ENCODE measurements at regions of chr14 and their contacts with region 1.

Region 1: DNA sequence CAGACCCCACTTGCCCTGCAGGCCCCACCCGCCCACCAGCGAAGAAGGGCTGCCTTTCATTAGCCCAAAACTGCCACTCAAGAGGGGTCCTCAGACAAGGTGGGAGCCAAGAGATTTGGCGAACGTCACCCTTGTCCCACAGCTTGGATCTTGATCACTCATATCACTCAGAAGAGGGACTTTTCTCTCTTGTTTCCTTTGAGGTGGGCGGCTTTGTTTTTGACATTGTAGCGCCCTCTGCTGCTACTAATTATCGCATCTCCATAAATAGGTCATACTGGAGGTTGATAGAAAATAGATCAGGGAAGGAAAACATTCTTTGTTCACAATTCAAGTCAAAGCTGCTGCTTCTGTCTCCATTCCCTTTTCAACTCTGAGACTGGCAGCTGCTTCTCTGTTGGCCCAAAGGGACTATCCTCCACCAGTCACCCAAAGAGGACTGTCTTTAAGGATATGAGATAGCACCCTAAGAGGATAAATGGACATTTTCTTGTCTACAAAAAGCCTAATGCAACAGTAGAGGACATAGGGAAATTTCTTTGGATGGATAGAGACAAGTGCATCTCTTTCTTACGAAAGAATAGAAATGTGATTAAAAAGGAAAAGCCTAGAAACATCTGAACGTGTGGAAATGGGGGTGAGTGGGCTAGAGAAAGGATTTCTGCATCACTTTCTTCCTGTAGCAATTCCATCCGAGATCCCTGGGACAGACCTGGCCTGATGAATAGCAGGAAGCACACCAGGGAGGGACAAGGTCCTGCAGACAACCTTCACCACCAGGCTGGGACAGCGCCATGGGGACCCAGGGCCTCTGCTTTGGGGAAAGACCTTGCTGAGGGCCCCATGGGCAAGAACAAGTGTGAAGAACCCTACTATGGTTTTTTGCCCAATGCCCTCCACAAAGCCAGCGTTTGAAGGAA is 115.8 kb downstream of the DAD1 start:
- DNase-seq: peak; percentile 29 to 77 (median 50)
- H3K4me3 ChIP-seq: no peak overlapping the region
- H3K27ac ChIP-seq: no peak overlapping the region
- H3K4me1 ChIP-seq: peaks cover 0 to 9% of the 10 kb centered on the region in 2 donors
- H3K27me3 ChIP-seq: no peaks in the 10 kb centered on the region
- CTCF ChIP-seq: peak; percentile 34 to 79 (median 70)
- POLR2A ChIP-seq: no peak

Region 2: DNA sequence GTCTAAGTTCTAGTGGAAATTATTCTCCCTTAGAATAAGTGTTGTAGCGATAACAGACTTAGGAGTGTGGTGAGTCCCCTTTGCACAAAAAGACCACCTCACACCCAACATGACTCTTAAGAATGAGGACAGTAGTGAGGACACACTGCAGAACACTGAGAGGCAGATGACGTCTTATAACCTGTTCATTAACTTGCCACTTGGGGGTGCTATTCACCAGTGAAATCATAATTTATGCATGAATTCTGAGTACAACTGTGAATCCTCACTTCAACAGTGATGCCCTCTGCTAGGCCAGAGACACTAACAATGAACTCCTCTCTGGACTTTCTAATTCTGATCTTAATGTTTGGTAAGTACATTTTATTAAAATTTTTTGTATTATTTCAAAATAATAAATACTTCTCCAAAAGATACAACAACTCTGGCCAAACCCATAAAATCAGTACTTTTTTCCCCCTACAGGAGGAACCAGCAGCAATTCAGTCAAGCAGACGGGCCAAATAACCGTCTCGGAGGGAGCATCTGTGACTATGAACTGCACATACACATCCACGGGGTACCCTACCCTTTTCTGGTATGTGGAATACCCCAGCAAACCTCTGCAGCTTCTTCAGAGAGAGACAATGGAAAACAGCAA is 158.9 kb before region 1 on chr14:
- intact Hi-C with region 1: loop called in 1 of 2 experiments (anchors 10 kb)
- DNase-seq: peak in 4 of 7 donors; percentile 15 to 43 (median 39)
- H3K4me3 ChIP-seq: no peak overlapping the region
- H3K27ac ChIP-seq: no peak overlapping the region
- H3K4me1 ChIP-seq: no peaks in the 10 kb centered on the region
- H3K27me3 ChIP-seq: peaks cover 5% of the 10 kb centered on the region
- CTCF ChIP-seq: peak; percentile 49 to 74 (median 68)
- POLR2A ChIP-seq: no peak

Region 3: DNA sequence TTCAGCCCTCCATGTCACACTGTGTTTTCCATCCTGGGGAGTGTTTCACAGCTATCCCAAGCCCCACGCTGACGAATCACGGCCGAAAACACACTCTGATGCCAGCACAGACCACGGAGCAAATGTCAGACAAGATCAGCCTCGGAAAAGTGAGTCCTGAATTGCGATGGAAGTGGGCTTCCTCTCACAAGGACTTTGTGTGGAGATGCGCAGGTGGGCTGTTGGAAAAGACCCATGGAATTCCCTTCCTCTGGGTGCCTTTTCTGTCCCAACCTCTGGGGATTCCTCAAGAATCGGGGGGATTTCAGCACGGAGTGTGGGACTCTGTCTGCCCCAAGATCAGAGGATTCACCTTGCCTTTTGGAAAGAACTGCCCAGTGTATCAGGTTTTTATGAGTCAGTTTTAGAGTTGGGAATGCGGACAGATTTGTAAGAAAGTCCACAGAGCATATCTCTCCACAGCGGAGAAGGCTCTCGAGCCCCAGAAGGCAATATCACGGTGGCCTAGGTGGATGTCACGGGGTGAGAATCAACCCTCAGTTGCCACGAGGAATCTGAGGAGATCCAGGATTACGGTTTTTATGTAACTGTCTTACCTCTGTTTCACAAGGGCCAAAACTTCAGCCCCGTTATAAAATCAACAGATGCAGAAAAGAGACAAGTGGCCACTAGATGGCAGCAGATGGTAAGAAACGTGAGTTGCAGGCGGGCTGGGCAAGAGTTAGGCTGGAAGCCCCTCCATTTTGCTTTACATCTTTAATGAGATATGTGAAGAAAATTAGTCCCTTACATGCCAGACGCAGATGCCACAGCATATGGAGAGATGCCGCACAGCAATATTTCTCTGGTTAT is 86.0 kb before region 1 on chr14:
- intact Hi-C with region 1: loop called (anchors 2 kb)
- DNase-seq: peak; percentile 50 to 86 (median 70)
- H3K4me3 ChIP-seq: no peak overlapping the region
- H3K27ac ChIP-seq: no peak overlapping the region
- H3K4me1 ChIP-seq: no peaks in the 10 kb centered on the region
- H3K27me3 ChIP-seq: peaks cover 7% of the 10 kb centered on the region
- CTCF ChIP-seq: peak; percentile 70 to 90 (median 80)
- POLR2A ChIP-seq: no peak

Measured in adrenal gland (tissue), 19 donors.